ENCODE measurements at regions of chr2 and their contacts with region 1.

Region 1: GRCh38 chr2:117814417-117815264 is at the start of gene DDX18:
- DNase-seq: peak; percentile 94 to 99 (median 96)
- ATAC-seq: peak; percentile 84
- H3K4me3 ChIP-seq: peak within 1 kb of the TSS; percentile 73
- H3K4me3 Mint-ChIP-seq: peak within 1 kb of the TSS; percentile 86
- H3K27ac ChIP-seq: peak within 1 kb of the TSS; percentile 96 to 97
- H3K27ac Mint-ChIP-seq: peak within 1 kb of the TSS; percentile 94
- H3K4me1 ChIP-seq: peaks cover 16% of the 10 kb centered on the region
- H3K4me1 Mint-ChIP-seq: peaks cover 52% of the 10 kb centered on the region
- H3K27me3 ChIP-seq: no peaks in the 10 kb centered on the region
- H3K27me3 Mint-ChIP-seq: no peaks in the 10 kb centered on the region
- CTCF ChIP-seq: peak; percentile 100
- total RNA-seq, gene DDX18: 172 to 177 TPM

Region 2: GRCh38 chr2:117801826-117802225 is 12.8 kb before region 1 on chr2:
- CTCF ChIA-PET with region 1: interaction called, 22 read pairs
- POLR2A ChIA-PET with region 1: interaction called, 6 read pairs
- intact Hi-C with region 1: no loop called
- DNase-seq: no peak
- ATAC-seq: no peak
- H3K4me3 ChIP-seq: no peak overlapping the region
- H3K4me3 Mint-ChIP-seq: no peak overlapping the region
- H3K27ac ChIP-seq: no peak overlapping the region
- H3K27ac Mint-ChIP-seq: no peak overlapping the region
- H3K4me1 ChIP-seq: no peaks in the 10 kb centered on the region
- H3K4me1 Mint-ChIP-seq: peaks cover 6% of the 10 kb centered on the region
- H3K27me3 ChIP-seq: peaks cover 6 to 7% of the 10 kb centered on the region in 2 experiments
- H3K27me3 Mint-ChIP-seq: peaks cover 28% of the 10 kb centered on the region
- CTCF ChIP-seq: no peak

Region 3: DNA sequence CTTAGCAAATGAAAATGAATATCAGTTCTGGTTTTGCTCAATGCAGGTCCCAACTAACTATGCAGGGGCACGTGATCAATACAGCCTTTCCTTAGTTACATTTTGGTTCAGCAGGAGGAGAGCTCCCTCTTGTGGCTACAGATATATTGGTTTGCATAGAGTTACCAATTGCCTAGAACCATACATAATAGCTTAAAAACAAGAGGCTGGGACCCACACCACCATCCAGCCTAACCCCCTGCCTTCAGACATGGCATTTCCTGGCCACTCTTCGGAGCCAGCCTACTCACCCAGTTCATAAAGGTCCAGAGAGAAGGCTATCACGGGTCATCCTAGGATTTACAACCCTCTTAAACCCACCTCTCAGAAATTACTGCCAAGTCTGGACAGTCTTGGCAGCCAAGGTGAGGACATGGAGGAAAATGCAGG is 188.8 kb after region 1 on chr2:
- CTCF ChIA-PET with region 1: interaction called, 24 read pairs
- POLR2A ChIA-PET with region 1: interaction called, 15 read pairs
- intact Hi-C with region 1: loop called in 1 of 2 experiments (anchors 1 kb)
- DNase-seq: peak in 11 of 14 experiments; percentile 2 to 86 (median 34)
- ATAC-seq: peak; percentile 97
- H3K4me3 ChIP-seq: no peak overlapping the region
- H3K4me3 Mint-ChIP-seq: no peak overlapping the region
- H3K27ac ChIP-seq: no peak overlapping the region
- H3K27ac Mint-ChIP-seq: peak overlapping the region; percentile 7
- H3K4me1 ChIP-seq: peaks cover 10% of the 10 kb centered on the region
- H3K4me1 Mint-ChIP-seq: peaks cover 17% of the 10 kb centered on the region
- H3K27me3 ChIP-seq: no peaks in the 10 kb centered on the region
- H3K27me3 Mint-ChIP-seq: no peaks in the 10 kb centered on the region
- CTCF ChIP-seq: peak; percentile 90

Region 4: DNA sequence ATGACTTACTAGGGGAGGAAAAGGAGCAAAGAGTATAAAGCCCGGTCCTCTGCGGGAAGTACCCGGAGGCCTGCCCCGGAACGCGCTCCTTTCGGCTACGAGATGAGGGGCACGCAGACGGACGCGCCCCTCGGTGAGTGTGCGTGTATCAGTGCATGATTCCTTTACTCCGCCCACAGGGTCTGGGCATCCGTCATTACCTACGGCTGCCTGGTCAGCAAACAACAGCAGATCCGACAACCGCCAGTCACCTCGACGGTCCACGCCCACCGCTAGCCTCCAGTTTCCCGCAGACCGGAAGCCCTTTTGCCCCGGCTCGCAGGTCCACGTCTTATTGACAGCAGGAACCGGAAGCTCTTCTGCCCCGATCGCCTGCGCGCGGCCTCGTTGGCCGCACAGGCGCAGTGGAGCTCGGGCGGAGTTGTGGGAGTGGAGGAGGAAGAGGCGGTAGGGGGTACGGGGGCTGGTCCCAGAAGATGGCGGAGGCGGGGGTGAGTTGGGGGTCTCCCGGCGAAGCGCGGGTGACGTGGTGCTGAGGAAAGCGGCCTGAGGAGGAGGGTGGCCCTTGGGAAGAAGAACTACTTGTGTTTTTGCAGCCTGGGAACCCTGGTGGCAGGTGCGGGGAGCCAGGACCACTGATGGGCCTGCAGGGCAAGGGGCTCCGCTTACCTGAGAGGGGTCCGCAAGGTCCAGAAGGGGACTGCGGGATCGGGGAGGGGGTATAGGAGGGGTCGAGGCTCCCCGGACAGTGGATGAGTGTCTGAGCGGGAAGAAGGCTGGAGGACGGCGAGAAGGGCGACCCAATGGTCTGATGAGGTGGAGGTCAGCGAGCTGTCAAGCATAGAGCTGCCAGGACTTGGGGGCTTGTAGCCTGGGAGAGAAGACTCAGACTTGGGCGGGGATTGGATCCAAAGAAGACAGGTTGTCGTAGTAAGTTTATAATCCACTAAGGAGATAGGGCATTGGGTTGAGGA is 273.7 kb after region 1 on chr2 and contains the start of gene INSIG2:
- CTCF ChIA-PET with region 1: interaction called, 4 read pairs
- POLR2A ChIA-PET with region 1: interaction called, 18 read pairs
- intact Hi-C with region 1: loop called (anchors 2 to 5 kb)
- DNase-seq: peak; percentile 71 to 95 (median 81)
- ATAC-seq: peak; percentile 88
- H3K4me3 ChIP-seq: peak within 1 kb of the TSS; percentile 91
- H3K4me3 Mint-ChIP-seq: peak within 1 kb of the TSS; percentile 97
- H3K27ac ChIP-seq: peak within 1 kb of the TSS; percentile 58 to 61
- H3K27ac Mint-ChIP-seq: peak within 1 kb of the TSS; percentile 88
- H3K4me1 ChIP-seq: peaks cover 10% of the 10 kb centered on the region
- H3K4me1 Mint-ChIP-seq: peaks cover 38% of the 10 kb centered on the region
- H3K27me3 ChIP-seq: no peaks in the 10 kb centered on the region
- H3K27me3 Mint-ChIP-seq: no peaks in the 10 kb centered on the region
- CTCF ChIP-seq: no peak
- total RNA-seq, gene INSIG2: 7.3 to 7.7 TPM

Region 5: GRCh38 chr2:118309946-118310680 is 495.5 kb after region 1 on chr2:
- CTCF ChIA-PET with region 1: no interaction called
- POLR2A ChIA-PET with region 1: interaction called, 3 read pairs
- intact Hi-C with region 1: loop called in 1 of 2 experiments (anchors 5 kb)
- DNase-seq: peak; percentile 43 to 83 (median 58)
- ATAC-seq: peak; percentile 83
- H3K4me3 ChIP-seq: peak overlapping the region; percentile 74
- H3K4me3 Mint-ChIP-seq: peak overlapping the region; percentile 95
- H3K27ac ChIP-seq: peak overlapping the region; percentile 70 to 93
- H3K27ac Mint-ChIP-seq: peak overlapping the region; percentile 98
- H3K4me1 ChIP-seq: peaks cover 19% of the 10 kb centered on the region
- H3K4me1 Mint-ChIP-seq: peaks cover 24% of the 10 kb centered on the region
- H3K27me3 ChIP-seq: no peaks in the 10 kb centered on the region
- H3K27me3 Mint-ChIP-seq: no peaks in the 10 kb centered on the region
- CTCF ChIP-seq: no peak

Region 6: DNA sequence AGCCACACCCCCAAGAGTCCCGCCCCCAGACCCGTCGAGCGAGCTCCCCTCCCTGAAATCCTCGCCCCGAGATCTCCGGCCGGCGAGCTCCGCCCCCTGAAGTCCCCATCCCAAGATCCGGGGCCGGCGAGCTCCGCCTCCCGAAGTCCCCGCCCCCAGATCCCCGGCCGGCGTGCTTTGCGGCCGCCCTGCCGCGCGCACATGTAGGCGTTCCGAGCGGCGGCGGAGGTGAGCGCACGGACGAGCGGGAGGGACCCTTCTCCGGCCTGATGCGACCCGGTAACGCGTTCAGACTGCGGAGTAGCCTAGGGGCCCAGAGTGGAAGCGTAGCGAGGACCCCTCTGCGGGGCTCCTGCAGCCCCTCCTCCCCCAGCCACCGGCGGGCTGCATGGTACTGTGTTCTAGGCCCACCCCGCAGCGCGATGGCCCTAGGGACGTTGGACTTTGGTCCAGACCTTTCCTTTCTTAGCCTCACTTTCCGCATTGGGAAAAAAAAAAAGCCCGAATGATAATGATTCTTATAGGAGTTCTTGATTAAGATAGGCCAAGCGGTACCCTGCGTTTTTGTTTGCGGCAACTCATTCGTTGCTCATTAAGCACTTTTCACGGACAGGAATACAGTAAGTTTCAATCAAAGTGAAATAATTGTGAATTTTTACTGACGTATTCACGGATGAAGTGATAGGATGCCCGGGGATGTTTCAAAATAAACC is 1864.5 kb after region 1 on chr2 and contains the start of gene TMEM177:
- CTCF ChIA-PET with region 1: no interaction called
- POLR2A ChIA-PET with region 1: interaction called, 3 read pairs
- intact Hi-C with region 1: loop called (anchors 10 kb)
- DNase-seq: peak; percentile 74 to 94 (median 87)
- ATAC-seq: peak; percentile 81
- H3K4me3 ChIP-seq: peak within 1 kb of the TSS; percentile 97
- H3K4me3 Mint-ChIP-seq: peak within 1 kb of the TSS; percentile 82
- H3K27ac ChIP-seq: peak within 1 kb of the TSS; percentile 56 to 67
- H3K27ac Mint-ChIP-seq: peak within 1 kb of the TSS; percentile 91
- H3K4me1 ChIP-seq: peaks cover 27% of the 10 kb centered on the region
- H3K4me1 Mint-ChIP-seq: peaks cover 46% of the 10 kb centered on the region
- H3K27me3 ChIP-seq: no peaks in the 10 kb centered on the region
- H3K27me3 Mint-ChIP-seq: no peaks in the 10 kb centered on the region
- CTCF ChIP-seq: no peak
- total RNA-seq, gene TMEM177: 3.6 to 4.0 TPM